ENCODE measurements at regions of chr9 and their contacts with region 1.

Region 1: GRCh38 chr9:99162759-99163364 is 57.9 kb downstream of the TGFBR1 start:
- DNase-seq: peak; percentile 69
- ATAC-seq: peak; percentile 59
- H3K4me3 ChIP-seq: no peak overlapping the region
- H3K4me3 Mint-ChIP-seq: peak overlapping the region; percentile 27
- H3K27ac ChIP-seq: no peak overlapping the region
- H3K27ac Mint-ChIP-seq: no peak overlapping the region
- H3K4me1 ChIP-seq: peaks cover 8 to 9% of the 10 kb centered on the region in 2 donors
- H3K4me1 Mint-ChIP-seq: peaks cover 37% of the 10 kb centered on the region
- H3K27me3 ChIP-seq: no peaks in the 10 kb centered on the region
- H3K27me3 Mint-ChIP-seq: no peaks in the 10 kb centered on the region
- CTCF ChIP-seq: peak; percentile 82

Region 2: GRCh38 chr9:99178912-99179872 is 16.3 kb after region 1 on chr9:
- CTCF ChIA-PET with region 1: interaction called, 185 read pairs
- POLR2A ChIA-PET with region 1: interaction called, 6 read pairs
- intact Hi-C with region 1: loop called (anchors 1 kb)
- DNase-seq: no peak
- ATAC-seq: no peak
- H3K4me3 ChIP-seq: no peak overlapping the region
- H3K4me3 Mint-ChIP-seq: peak overlapping the region; percentile 1
- H3K27ac ChIP-seq: no peak overlapping the region
- H3K27ac Mint-ChIP-seq: peak overlapping the region; percentile 47
- H3K4me1 ChIP-seq: peaks cover 20 to 35% of the 10 kb centered on the region in 2 donors
- H3K4me1 Mint-ChIP-seq: peaks cover 74% of the 10 kb centered on the region
- H3K27me3 ChIP-seq: no peaks in the 10 kb centered on the region
- H3K27me3 Mint-ChIP-seq: no peaks in the 10 kb centered on the region
- CTCF ChIP-seq: no peak

Region 3: GRCh38 chr9:99398241-99398640 is 235.4 kb after region 1 on chr9:
- CTCF ChIA-PET with region 1: no interaction called
- POLR2A ChIA-PET with region 1: no interaction called
- intact Hi-C with region 1: no loop called
- DNase-seq: no peak
- ATAC-seq: no peak
- H3K4me3 ChIP-seq: no peak overlapping the region
- H3K4me3 Mint-ChIP-seq: no peak overlapping the region
- H3K27ac ChIP-seq: no peak overlapping the region
- H3K27ac Mint-ChIP-seq: no peak overlapping the region
- H3K4me1 ChIP-seq: no peaks in the 10 kb centered on the region
- H3K4me1 Mint-ChIP-seq: no peaks in the 10 kb centered on the region
- H3K27me3 ChIP-seq: no peaks in the 10 kb centered on the region
- H3K27me3 Mint-ChIP-seq: peaks cover 3% of the 10 kb centered on the region
- CTCF ChIP-seq: no peak

Region 4: DNA sequence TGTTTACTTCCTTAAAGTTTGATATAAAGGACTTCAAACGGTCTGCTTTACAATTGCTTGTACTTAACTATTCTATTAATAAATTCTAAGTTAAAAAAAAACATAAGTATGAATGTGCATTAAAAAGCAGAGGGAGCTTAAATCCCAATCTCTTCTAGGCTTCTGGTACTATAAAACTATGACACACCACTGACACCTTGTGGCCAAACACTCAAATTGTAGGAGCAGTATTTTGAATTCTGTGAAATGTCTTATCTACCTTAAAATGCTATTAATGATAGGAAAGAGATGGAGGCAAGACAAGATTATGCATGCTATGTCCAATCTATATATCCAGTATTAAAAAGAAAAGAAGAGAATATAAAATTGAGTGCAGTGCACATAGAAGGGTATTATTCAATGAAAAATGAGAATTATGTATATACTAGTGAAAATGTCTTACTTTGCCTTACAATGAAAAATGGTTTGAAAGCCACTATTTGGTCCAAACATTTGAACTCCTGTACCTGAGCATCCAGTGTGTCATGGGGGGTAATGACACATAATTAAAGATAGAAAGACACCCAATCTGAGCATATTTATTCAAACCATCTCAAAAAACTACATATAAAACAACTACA is 848.3 kb after region 1 on chr9:
- CTCF ChIA-PET with region 1: interaction called, 8 read pairs
- POLR2A ChIA-PET with region 1: no interaction called
- intact Hi-C with region 1: loop called (anchors 1 kb)
- DNase-seq: peak; percentile 66
- ATAC-seq: no peak
- H3K4me3 ChIP-seq: no peak overlapping the region
- H3K4me3 Mint-ChIP-seq: no peak overlapping the region
- H3K27ac ChIP-seq: no peak overlapping the region
- H3K27ac Mint-ChIP-seq: no peak overlapping the region
- H3K4me1 ChIP-seq: no peaks in the 10 kb centered on the region
- H3K4me1 Mint-ChIP-seq: no peaks in the 10 kb centered on the region
- H3K27me3 ChIP-seq: no peaks in the 10 kb centered on the region
- H3K27me3 Mint-ChIP-seq: no peaks in the 10 kb centered on the region
- CTCF ChIP-seq: peak; percentile 82

Region 5: DNA sequence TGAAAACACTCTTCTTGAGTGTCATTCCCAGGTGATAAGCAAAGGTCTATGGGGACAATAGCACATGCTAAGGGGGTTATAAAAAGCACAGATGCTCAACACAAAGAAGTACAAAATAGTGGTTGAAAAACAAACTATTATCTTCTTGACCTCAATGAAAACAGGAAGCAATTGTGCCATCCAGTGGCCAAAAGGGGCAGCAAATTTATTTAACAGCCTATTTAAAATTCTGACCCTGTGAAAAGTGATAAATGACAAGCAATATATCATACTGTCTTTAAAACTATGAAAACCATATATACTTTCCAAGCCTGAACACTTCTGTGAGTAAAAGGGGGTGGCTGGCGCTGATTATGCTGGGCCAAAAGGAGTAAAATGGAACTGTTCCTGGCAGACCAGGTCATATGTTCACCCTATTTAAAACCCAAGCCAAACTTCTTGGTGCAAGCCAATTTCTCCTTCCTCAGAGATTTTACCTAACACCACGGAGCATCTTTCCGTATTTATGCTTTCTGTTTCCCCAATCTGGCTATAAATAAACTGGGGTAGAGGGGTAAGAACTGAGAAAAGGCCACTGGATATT is 1160.2 kb after region 1 on chr9:
- CTCF ChIA-PET with region 1: interaction called, 56 read pairs
- POLR2A ChIA-PET with region 1: no interaction called
- intact Hi-C with region 1: loop called (anchors 1 kb)
- DNase-seq: peak; percentile 61
- ATAC-seq: no peak
- H3K4me3 ChIP-seq: no peak overlapping the region
- H3K4me3 Mint-ChIP-seq: no peak overlapping the region
- H3K27ac ChIP-seq: no peak overlapping the region
- H3K27ac Mint-ChIP-seq: no peak overlapping the region
- H3K4me1 ChIP-seq: no peaks in the 10 kb centered on the region
- H3K4me1 Mint-ChIP-seq: peaks cover 4% of the 10 kb centered on the region
- H3K27me3 ChIP-seq: no peaks in the 10 kb centered on the region
- H3K27me3 Mint-ChIP-seq: no peaks in the 10 kb centered on the region
- CTCF ChIP-seq: peak; percentile 78